ENCODE measurements at regions of chr10 and their contacts with region 1.

Region 1: GRCh38 chr10:67779465-67780203 is 58.4 kb downstream of the DNAJC12 start:
- DNase-seq: peak; percentile 43 to 78 (median 68)
- H3K4me3 ChIP-seq: no peak overlapping the region
- H3K4me3 Mint-ChIP-seq: no peak overlapping the region
- H3K27ac ChIP-seq: no peak overlapping the region
- H3K27ac Mint-ChIP-seq: no peak overlapping the region
- H3K4me1 ChIP-seq: peaks cover 7% of the 10 kb centered on the region
- H3K4me1 Mint-ChIP-seq: peaks cover 13 to 26% (median 23%) of the 10 kb centered on the region in 3 donors
- H3K27me3 ChIP-seq: no peaks in the 10 kb centered on the region
- H3K27me3 Mint-ChIP-seq: no peaks in the 10 kb centered on the region

Region 2: DNA sequence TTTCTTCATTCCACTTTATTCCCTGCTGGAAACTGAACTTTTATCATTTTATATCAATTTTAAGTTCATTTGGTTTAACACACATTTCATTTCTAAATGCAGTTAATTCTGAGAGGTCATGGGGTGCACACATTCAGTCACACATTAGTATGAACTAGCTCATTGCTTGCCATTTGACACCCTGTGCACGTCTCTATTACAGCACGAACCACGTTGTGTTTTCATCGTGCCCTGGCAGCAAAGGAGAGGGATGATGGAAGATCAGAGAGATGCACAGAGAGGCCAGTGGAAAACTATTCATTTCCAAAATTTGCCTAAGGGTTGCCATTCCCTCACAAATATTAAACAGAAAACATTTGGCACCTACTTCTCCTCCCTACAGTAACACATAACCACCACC is 129.1 kb before region 1 on chr10:
- CTCF ChIA-PET with region 1: no interaction called
- POLR2A ChIA-PET with region 1: no interaction called
- DNase-seq: no peak
- H3K4me3 ChIP-seq: no peak overlapping the region
- H3K4me3 Mint-ChIP-seq: no peak overlapping the region
- H3K27ac ChIP-seq: no peak overlapping the region
- H3K27ac Mint-ChIP-seq: no peak overlapping the region
- H3K4me1 ChIP-seq: no peaks in the 10 kb centered on the region
- H3K4me1 Mint-ChIP-seq: no peaks in the 10 kb centered on the region
- H3K27me3 ChIP-seq: no peaks in the 10 kb centered on the region
- H3K27me3 Mint-ChIP-seq: peaks cover 2 to 10% of the 10 kb centered on the region in 2 donors

Region 3: DNA sequence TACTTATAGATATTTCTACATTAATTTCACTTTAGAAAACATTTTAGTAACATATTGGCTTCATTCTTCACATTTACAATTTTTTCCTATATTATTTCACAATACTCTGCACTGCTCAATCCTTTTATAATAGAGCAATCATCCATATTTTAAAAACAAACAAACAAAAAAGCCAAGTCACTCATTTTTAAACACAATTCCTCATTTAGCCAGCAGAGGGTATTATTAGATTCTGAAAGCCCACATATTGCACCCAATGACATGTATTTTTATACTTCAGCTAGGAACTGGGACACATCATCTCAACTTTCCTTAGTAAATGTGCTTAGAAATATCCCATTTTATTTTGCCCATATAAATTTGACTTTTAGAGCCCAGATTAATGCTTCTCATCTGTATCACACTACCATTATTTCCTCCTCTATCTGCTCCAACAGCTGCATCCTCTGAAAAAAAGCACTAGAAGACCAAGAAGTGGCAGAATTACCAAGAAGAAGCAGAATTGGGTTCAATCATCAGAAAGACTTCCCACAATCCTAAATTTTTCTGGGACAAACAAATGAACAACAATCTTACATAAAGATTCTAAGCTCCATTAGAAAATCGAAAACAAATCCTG is 113.1 kb before region 1 on chr10:
- CTCF ChIA-PET with region 1: interaction called, 27 read pairs
- POLR2A ChIA-PET with region 1: no interaction called
- DNase-seq: peak in 1 of 5 donors; percentile 7
- H3K4me3 ChIP-seq: no peak overlapping the region
- H3K4me3 Mint-ChIP-seq: no peak overlapping the region
- H3K27ac ChIP-seq: no peak overlapping the region
- H3K27ac Mint-ChIP-seq: no peak overlapping the region
- H3K4me1 ChIP-seq: no peaks in the 10 kb centered on the region
- H3K4me1 Mint-ChIP-seq: no peaks in the 10 kb centered on the region
- H3K27me3 ChIP-seq: no peaks in the 10 kb centered on the region
- H3K27me3 Mint-ChIP-seq: peaks cover 3 to 7% of the 10 kb centered on the region in 2 donors

Region 4: DNA sequence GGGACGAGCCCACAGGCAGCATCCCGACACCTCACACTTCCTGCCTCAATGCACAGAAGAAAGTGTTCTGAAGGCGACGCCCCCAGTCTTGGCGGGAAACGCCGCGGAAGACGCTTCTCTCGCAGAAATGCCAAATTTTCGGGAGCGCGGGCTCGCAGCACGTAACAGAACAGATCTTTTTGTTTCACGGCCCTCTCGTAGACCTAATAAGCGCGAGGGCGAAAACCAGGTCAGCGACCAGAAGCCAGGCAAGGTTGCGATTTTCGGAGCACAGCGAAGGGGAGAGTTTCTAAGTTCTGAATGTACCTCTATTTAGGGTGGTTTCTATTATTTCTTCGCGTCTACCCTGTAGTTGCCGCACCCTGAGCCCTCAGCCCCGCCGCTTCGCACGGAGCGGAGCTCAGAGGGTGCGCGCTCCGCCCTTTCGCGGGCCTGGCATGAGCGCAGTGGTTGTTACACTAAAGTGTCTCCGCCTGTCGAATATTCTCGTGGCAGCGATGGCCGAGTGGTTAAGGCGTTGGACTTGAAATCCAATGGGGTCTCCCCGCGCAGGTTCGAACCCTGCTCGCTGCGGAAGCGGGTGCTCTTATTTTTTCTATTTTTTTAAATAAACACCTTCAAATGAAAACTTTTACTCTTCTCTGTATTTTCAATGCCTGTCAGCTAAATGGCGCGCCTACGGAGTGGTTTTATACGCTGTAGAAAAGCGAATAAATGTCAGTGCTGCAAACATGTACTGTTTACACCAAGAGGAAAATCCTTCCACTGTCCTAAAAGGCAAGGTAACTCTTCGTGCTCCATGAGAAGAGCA is 15.4 kb before region 1 on chr10:
- CTCF ChIA-PET with region 1: interaction called, 13 read pairs
- POLR2A ChIA-PET with region 1: interaction called, 4 read pairs
- DNase-seq: peak; percentile 90 to 98 (median 96)
- H3K4me3 ChIP-seq: peak overlapping the region; percentile 98
- H3K4me3 Mint-ChIP-seq: peak overlapping the region; percentile 87 to 97 (median 92)
- H3K27ac ChIP-seq: peak overlapping the region; percentile 86
- H3K27ac Mint-ChIP-seq: peak overlapping the region; percentile 94 to 99 (median 98)
- H3K4me1 ChIP-seq: peaks cover 10% of the 10 kb centered on the region
- H3K4me1 Mint-ChIP-seq: peaks cover 12 to 14% (median 14%) of the 10 kb centered on the region in 3 donors
- H3K27me3 ChIP-seq: no peaks in the 10 kb centered on the region
- H3K27me3 Mint-ChIP-seq: peaks cover 4 to 14% of the 10 kb centered on the region in 2 donors